H1 (cell line): ENCODE measurements at regions of chr6 and their contacts with region 1.

Region 1: GRCh38 chr6:3162565-3163247 is 5.4 kb upstream of the TUBB2A start:
- DNase-seq: peak in 1 of 2 experiments; percentile 85
- H3K4me3 ChIP-seq: peak overlapping the region; percentile 42 to 83 (median 72)
- H3K27ac ChIP-seq: peak overlapping the region; percentile 50; the same call in 1 of the 2 replicates
- H3K4me1 ChIP-seq: peaks cover 14 to 48% (median 41%) of the 10 kb centered on the region in 4 experiments
- H3K27me3 ChIP-seq: no peaks in the 10 kb centered on the region
- CTCF ChIP-seq: peak in 1 of 3 experiments; percentile 9; a peak in 2 of 4 replicates
- EP300 ChIP-seq: no peak
- POLR2A ChIP-seq: 0 out of 3 replicates have a peak, but pooled peaks of 1 of the 2 experiments have one; percentile 38
- RAD21 ChIP-seq: 0 out of 4 replicates have a peak, but pooled peaks of 1 of the 2 experiments have one; percentile 5

Region 2: DNA sequence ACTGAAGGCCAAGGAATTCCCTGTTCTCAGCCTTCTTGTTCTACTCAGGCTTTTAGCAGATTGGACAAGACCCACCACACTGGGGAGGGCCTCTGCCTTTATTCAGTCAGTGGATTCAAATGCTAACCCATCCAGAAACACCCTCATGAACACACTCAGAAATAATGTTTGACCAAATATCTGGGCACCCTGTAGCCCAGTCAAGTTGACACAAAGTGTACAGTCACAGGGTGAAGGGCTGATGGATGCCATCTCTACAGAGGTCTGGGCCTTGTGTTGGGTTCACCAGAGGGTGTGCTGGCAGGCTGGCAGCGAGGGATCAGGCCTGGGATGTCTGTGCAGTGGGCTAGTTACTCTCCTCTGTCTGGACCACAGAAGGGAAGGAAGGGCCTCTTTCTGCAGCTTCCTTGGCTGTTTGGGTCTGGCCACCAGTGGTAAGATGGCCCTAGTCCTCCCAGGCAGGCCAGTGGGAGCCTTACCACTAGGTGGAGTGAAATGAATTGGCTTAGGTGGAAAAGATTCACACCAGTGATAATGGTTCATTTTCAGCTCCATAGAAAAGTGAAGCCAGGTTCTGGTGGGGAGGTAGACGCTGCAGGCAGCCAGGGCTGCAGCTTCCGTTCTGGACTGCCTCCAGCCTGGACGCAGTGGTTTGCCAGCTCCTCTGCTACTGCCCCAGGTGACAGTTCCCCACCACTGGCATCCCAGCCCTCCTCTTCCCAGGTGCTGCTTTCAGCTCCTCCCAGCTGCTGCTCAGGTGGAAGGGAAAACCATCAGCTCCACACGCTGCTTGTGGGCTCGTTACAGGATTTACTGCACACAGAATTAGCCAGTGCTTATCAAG is 14.6 kb before region 1 on chr6:
- CTCF ChIA-PET with region 1: interaction called, 6 read pairs
- POLR2A ChIA-PET with region 1: interaction called, 24 read pairs
- DNase-seq: no peak
- H3K4me3 ChIP-seq: no peak overlapping the region
- H3K27ac ChIP-seq: no peak overlapping the region
- H3K4me1 ChIP-seq: peaks cover 2 to 7% (median 3%) of the 10 kb centered on the region in 4 experiments; a peak in 6 of 7 replicates
- H3K27me3 ChIP-seq: no peaks in the 10 kb centered on the region
- CTCF ChIP-seq: peak in 2 of 3 experiments; percentile 13 to 26; a peak in 2 of 4 replicates
- EP300 ChIP-seq: no peak
- POLR2A ChIP-seq: no peak
- RAD21 ChIP-seq: peak; percentile 23 to 30; a peak in 3 of 4 replicates

Region 3: GRCh38 chr6:3186974-3187382 is 24.3 kb after region 1 on chr6:
- CTCF ChIA-PET with region 1: interaction called, 4 read pairs
- POLR2A ChIA-PET with region 1: interaction called, 18 read pairs
- DNase-seq: no peak
- H3K4me3 ChIP-seq: no peak overlapping the region
- H3K27ac ChIP-seq: no peak overlapping the region
- H3K4me1 ChIP-seq: no peaks in the 10 kb centered on the region
- H3K27me3 ChIP-seq: peaks cover 0 to 2% (median 0%) of the 10 kb centered on the region in 4 experiments; a peak in 1 of 7 replicates
- CTCF ChIP-seq: no peak
- EP300 ChIP-seq: no peak
- POLR2A ChIP-seq: no peak
- RAD21 ChIP-seq: no peak

Region 4: DNA sequence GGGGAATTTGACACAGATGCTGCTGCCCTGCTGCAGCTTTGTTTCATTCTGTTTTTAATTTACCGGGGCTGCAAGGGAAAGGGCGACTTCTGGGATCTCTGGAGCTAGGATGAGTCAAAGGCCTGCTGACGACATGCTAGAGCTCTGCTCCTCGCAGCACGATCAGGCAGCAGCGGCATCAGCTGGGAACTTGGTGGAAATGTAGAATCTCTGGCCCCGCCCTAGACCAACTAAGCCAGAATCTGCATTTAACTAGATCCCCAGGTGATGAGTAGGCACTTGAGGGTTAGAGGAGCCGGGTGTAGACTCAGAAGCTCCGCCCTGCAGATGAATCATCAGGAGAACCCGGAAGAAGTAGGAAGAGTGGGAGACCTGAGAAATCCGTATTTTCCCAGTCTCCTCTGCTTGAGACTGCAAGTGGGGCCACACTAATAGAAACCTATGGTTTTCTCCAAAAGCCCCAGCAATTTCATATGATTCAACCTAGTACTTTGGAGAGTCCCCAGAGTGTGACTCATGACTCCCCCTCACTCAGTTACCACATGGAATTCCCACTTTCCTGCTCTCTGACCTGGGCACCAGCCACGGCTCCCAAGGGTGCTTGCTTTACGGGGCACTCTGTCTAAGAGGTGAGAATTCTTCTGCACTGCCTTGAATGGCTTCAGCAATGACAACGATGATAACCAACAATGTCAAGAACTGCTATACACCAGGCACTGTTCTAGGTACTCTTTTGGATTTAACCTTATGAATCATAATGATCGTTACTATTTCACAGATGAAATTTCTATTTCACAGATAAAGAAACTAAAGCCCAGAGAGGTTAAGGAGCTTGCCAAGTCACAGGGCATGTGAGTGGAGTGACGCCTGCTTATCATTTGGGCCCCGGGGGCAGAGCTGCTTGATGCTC is 46.7 kb after region 1 on chr6:
- CTCF ChIA-PET with region 1: interaction called, 10 read pairs
- POLR2A ChIA-PET with region 1: interaction called, 22 read pairs
- DNase-seq: peak; percentile 69 to 87
- H3K4me3 ChIP-seq: peak overlapping the region in 1 of 4 experiments; percentile 39; a peak in 2 of 8 replicates
- H3K27ac ChIP-seq: 0 out of 2 replicates have a peak overlapping the region, but pooled peaks have one; percentile 9
- H3K4me1 ChIP-seq: peaks cover 3 to 10% (median 4%) of the 10 kb centered on the region in 4 experiments; a peak in 6 of 7 replicates
- H3K27me3 ChIP-seq: no peaks in the 10 kb centered on the region
- CTCF ChIP-seq: peak in 2 of 3 experiments; percentile 19 to 24; a peak in 2 of 4 replicates
- EP300 ChIP-seq: no peak
- POLR2A ChIP-seq: peak; percentile 38 to 62; a peak in 2 of 3 replicates
- RAD21 ChIP-seq: peak; percentile 46 to 58; a peak in 3 of 4 replicates

Region 5: DNA sequence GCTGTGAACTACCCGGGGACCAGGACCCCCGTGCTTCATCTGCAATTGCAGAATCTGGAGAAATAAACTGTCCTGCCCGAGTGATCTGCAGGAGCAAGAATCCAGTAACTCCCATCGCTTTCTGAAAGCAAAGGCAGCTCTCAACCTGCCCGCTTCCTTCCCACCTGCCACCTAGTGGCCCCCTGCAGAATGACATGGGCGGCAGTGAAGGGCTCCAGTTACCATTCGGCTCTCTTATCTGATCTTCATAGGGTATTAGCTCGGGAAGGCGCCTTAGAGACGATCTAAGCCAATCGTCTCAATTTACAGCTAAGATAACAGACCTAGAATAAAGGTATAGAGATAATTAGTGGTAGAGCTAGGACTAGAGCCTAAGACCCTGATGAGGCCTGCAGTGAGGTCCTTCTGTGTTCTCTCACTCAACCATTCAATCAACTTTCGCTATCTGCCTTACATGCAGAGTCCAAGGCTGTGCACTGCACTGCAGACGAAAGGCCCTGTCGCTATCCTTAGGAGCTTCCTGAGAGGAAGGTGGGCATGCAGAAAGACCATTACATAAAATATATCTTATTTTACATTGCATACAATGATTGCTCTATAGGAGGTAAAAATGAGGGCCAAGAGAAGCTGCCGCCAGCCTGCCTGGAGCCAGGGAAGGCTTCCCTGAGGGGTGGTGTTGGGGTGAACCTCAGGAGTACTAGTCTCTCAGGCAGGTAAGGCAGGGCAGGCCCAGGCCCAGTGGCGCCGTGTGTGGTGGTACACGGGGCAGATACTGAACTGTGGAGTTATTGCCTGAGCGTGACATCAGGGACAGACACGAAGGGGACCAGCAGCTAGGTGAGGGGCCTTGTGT is 89.0 kb after region 1 on chr6:
- CTCF ChIA-PET with region 1: interaction called, 18 read pairs
- POLR2A ChIA-PET with region 1: interaction called, 6 read pairs
- DNase-seq: peak in 1 of 2 experiments; percentile 95
- H3K4me3 ChIP-seq: no peak overlapping the region
- H3K27ac ChIP-seq: no peak overlapping the region
- H3K4me1 ChIP-seq: peaks cover 3 to 9% (median 7%) of the 10 kb centered on the region in 4 experiments; a peak in 6 of 7 replicates
- H3K27me3 ChIP-seq: peaks cover 0 to 3% (median 1%) of the 10 kb centered on the region in 4 experiments; a peak in 2 of 7 replicates
- CTCF ChIP-seq: peak; percentile 91 to 97 (median 94)
- EP300 ChIP-seq: no peak
- POLR2A ChIP-seq: no peak
- RAD21 ChIP-seq: peak; percentile 81 to 89